Activated CD4-positive, alpha-beta T cell treated with anti-CD3 and anti-CD28 coated beads for 36 hours (primary cell): ENCODE measurements at regions of chr4 and their contacts with region 1.

Region 1: GRCh38 chr4:39638354-39639240 is at the start of gene SMIM14:
- DNase-seq: peak; percentile 94
- ATAC-seq: peak; percentile 87
- H3K4me3 Mint-ChIP-seq: peak within 1 kb of the TSS; percentile 83
- H3K27ac Mint-ChIP-seq: peak within 1 kb of the TSS; percentile 86
- H3K4me1 Mint-ChIP-seq: peaks cover 33% of the 10 kb centered on the region
- H3K27me3 Mint-ChIP-seq: no peaks in the 10 kb centered on the region
- total RNA-seq, gene SMIM14: 1.4 to 2.0 TPM

Region 2: DNA sequence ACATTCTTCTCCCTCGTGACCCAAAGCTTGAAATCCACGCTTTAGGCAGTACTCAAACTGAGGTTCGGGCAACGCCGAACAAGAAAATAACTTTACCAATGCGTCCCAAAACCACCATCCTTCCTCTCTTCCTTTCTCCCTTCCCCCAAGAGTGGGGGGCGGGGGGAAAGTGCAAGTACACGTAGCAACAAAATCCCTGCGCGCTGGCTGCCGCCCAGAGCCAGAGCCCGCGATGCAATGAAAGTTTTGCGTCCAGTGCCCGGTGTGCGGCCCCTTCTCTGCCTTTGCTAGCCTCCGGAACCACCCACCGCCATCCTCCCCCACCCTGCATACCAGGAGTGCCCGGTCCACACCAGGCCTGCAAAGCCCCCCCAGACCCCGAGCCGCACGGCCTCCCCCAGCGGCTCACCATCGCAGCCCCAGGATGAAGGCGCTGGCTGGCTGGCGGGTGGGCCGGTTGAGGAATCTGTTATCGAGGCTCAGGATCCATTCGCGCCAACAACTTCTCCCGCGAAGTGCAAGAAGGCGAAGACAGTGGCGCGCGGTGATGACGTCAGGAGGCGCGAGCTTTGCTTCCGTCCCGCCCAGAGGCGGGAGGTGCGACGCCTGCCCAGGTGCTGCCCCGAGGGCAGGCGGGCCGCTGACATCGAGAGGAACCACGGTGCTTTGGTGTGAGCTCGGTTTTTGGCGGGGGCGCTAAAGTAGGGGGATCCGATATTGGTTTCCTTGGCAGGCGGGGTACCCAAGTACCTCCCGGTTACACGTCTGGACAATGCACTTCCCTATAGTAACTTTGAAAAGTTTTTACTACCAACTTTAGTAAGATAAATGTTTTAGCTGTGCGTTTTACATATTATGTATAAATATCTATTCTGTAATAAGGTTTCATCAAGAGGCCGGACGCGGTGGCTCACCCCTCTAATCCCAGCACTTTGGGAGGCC is 272.5 kb before region 1 on chr4 and contains the start of gene RFC1:
- CTCF ChIA-PET with region 1: no interaction called
- POLR2A ChIA-PET with region 1: no interaction called
- intact Hi-C with region 1: loop called in 1 of 2 experiments (anchors 1 kb)
- DNase-seq: peak; percentile 97
- ATAC-seq: peak; percentile 90
- H3K4me3 Mint-ChIP-seq: peak within 1 kb of the TSS; percentile 98
- H3K27ac Mint-ChIP-seq: peak within 1 kb of the TSS; percentile 97
- H3K4me1 Mint-ChIP-seq: peaks cover 32% of the 10 kb centered on the region
- H3K27me3 Mint-ChIP-seq: no peaks in the 10 kb centered on the region
- total RNA-seq, gene RFC1: 112 to 216 TPM